Activated naive CD4-positive, alpha-beta T cell treated with anti-CD3 and anti-CD28 coated beads for 36 hours (primary cell): ENCODE measurements at regions of chr20 and their contacts with region 1.

Region 1: GRCh38 chr20:52104546-52105441 is 86.8 kb downstream of the ZFP64 start:
- DNase-seq: no peak
- H3K4me3 Mint-ChIP-seq: peak overlapping the region; percentile 61
- H3K27ac Mint-ChIP-seq: no peak overlapping the region
- H3K4me1 Mint-ChIP-seq: peaks cover 23% of the 10 kb centered on the region
- H3K27me3 Mint-ChIP-seq: peaks cover 23% of the 10 kb centered on the region

Region 2: DNA sequence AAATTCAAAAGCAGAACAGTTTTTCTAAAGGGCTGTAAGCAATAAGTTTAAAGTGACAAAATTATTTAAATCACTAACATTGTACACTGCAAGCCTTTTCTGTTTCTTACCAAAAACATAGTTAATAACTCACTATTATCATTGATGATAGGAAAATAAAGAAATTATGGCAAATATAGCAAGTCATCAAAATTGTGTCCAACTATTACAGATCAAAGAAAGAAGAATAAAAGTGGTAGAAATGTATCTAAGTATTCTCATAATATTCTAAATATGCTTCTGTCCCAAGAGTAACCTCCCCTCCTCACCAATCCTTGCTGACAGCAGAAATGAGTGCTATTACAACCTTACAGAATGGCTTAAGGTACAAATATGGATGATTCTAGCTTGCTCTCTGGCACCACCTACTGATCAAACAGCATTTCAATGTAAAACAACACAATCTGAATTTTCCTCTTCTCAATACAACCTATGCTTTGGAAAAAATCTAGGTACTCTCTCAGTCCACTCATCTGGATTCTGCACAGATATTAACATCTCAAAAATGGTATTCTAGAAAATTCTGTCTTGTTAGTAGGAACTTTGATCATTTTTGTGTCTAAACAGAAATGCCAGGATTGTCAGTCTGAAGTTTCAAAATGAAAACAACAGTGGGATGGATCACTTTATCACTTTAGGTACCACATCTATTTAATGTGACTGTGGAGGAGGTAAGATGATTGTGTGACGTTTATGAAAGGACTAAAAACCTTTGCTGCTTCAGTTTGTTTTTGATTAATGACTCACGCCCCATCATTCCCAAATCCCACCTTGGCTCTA is 45.9 kb after region 1 on chr20:
- CTCF ChIA-PET with region 1: no interaction called
- intact Hi-C with region 1: loop called (anchors 1 kb)
- DNase-seq: peak; percentile 52
- H3K4me3 Mint-ChIP-seq: no peak overlapping the region
- H3K27ac Mint-ChIP-seq: no peak overlapping the region
- H3K4me1 Mint-ChIP-seq: no peaks in the 10 kb centered on the region
- H3K27me3 Mint-ChIP-seq: no peaks in the 10 kb centered on the region